Mammary epithelial cell (primary cell): ENCODE measurements at regions of chr7 and their contacts with region 1.

Region 1: DNA sequence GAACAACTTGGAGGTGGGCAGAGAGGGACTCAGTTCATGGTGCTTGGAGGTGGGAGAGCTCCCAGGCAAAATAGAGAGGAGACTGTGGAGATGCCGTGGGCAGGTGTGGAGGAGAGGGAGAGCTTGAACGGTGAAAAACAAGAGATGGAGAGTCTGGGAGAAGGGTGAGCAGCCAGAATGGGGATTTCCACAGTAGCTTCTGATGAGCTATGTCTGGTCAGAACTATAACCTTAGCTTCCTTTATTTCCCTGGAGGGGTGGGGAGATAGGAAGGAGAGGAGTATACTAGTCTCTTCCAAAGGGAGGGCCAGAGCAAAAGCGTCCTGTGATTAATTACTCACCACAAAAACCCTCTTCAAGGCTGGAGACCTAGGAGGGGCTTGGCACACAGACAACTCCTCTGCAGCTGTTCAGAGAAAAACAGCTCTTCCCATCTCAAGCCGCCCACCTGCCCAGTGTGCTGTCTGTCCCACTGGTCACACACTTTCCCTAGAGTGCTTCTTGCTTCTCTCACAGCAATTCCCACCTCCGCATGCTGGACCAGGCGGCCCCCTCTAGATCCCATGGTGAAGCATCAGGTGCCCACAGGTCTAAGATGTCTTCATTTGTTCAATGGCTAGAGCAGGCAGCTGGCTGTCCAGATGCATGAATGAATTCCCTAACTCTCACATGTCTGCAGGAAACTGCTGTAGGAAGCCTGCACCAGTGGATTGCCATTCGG is 41.9 kb downstream of the TAS2R41 start:
- DNase-seq: peak; percentile 51
- H3K4me3 ChIP-seq: no peak overlapping the region
- H3K27ac ChIP-seq: no peak overlapping the region
- H3K4me1 ChIP-seq: peaks cover 6% of the 10 kb centered on the region
- H3K27me3 ChIP-seq: no peaks in the 10 kb centered on the region
- CTCF ChIP-seq: no peak

Region 2: GRCh38 chr7:143223784-143224183 is 295.8 kb before region 1 on chr7:
- CTCF ChIA-PET with region 1: no interaction called
- dilution Hi-C with region 1: no loop called
- in situ Hi-C with region 1: no loop called
- intact Hi-C with region 1: no loop called
- DNase-seq: no peak
- H3K4me3 ChIP-seq: no peak overlapping the region
- H3K27ac ChIP-seq: no peak overlapping the region
- H3K4me1 ChIP-seq: no peaks in the 10 kb centered on the region
- H3K27me3 ChIP-seq: no peaks in the 10 kb centered on the region
- CTCF ChIP-seq: no peak

Region 3: DNA sequence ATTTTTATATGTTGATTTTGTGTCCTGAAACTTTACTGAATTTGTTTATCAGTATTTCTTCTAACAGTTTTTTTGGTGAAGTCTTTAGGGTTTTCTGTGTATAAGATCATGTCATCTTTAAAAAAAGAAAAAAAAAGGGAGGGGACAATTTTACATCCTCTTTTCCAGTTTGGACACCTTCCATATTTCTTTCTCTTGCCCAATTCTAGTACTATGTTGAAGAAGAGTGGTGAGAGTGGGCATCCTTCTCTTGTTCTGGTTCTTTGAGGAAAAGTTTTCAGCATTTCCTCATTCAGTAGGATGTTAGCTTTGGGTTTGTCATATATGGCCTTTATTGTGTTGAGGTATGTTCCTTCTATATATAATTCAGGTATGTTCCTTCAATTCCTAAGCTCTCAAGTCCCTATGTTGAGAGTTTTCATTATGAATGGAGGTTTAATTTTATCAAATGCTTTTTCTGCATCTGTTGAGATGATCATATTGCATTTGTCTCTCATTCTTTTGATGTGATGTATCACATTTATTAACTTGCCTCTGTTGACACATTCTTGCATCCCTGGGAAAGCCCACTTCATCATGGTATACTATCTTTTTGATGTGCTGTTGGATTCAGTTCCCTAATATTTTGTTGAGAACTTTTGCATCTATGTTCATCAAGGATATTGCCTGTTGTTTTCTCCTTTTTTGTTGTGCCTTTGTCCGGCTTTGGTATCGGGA is 285.6 kb before region 1 on chr7:
- CTCF ChIA-PET with region 1: no interaction called
- dilution Hi-C with region 1: no loop called
- in situ Hi-C with region 1: no loop called
- intact Hi-C with region 1: loop called (anchors 5 kb)
- DNase-seq: no peak
- H3K4me3 ChIP-seq: no peak overlapping the region
- H3K27ac ChIP-seq: no peak overlapping the region
- H3K4me1 ChIP-seq: no peaks in the 10 kb centered on the region
- H3K27me3 ChIP-seq: no peaks in the 10 kb centered on the region
- CTCF ChIP-seq: no peak

Region 4: DNA sequence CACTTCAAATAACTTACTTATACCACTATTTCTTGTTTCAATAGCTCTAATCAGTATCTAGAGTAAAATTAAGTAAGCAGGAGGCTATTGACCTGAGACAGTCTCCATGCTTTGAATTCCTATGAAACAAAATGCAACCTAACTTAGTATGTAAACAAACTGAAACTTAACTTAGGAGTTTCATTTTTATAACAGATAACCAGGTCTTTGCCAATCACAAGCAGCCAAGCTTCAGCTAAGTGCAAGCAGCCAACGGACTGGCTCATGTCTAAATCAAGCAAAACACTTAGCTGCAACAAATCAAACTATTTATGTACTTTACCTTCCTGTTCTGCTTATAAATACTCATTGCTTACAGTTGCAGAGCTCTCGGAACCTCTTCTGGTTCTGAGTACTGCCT is 260.7 kb before region 1 on chr7:
- CTCF ChIA-PET with region 1: no interaction called
- dilution Hi-C with region 1: no loop called
- in situ Hi-C with region 1: no loop called
- intact Hi-C with region 1: no loop called
- DNase-seq: no peak
- H3K4me3 ChIP-seq: no peak overlapping the region
- H3K27ac ChIP-seq: no peak overlapping the region
- H3K4me1 ChIP-seq: peaks cover 14% of the 10 kb centered on the region
- H3K27me3 ChIP-seq: no peaks in the 10 kb centered on the region
- CTCF ChIP-seq: no peak